Sigmoid colon (tissue), 7 donors: ENCODE measurements at regions of chr13 and their contacts with region 1.

Region 1: DNA sequence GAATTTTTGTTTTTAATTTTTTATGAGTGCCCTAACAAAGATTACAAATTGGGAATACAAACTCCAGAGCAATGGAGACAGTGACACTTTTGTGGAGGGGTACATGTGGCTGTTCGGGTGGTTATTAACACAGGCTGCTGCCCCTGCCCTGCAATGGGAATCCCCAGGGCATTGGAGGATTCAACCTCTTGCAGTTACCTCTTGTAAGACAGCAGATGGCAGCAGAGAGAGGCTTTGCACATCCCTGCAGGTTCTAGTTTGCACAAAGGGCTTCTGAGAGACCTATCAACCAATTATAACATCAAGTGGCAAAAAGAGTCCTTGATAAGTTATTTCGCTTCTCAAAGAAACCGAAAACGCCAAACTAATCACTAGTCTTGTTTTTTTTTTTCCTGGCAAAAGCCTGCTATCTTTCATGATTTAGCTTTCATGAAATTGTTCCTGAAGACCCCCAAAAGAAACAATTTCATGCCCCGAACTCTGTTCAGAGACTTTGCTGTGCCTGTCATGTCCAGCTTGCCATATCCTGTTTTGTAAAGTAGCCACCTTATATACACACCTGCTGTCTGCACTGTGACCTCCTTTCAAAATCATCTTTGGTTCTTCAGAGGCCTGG is 10.4 kb downstream of the GJB2 start:
- DNase-seq: no peak
- H3K4me3 ChIP-seq: no peak overlapping the region
- H3K27ac ChIP-seq: no peak overlapping the region
- H3K4me1 ChIP-seq: peaks cover 0 to 2% (median 0%) of the 10 kb centered on the region in 4 donors
- H3K27me3 ChIP-seq: peaks cover 3 to 66% (median 15%) of the 10 kb centered on the region in 3 donors
- CTCF ChIP-seq: peak in 3 of 4 experiments; percentile 45 to 80 (median 66)
- EP300 ChIP-seq: no peak
- POLR2A ChIP-seq: no peak

Region 2: GRCh38 chr13:19822673-19823072 is 359.7 kb before region 1 on chr13:
- intact Hi-C with region 1: no loop called
- DNase-seq: no peak
- H3K4me3 ChIP-seq: no peak overlapping the region
- H3K27ac ChIP-seq: no peak overlapping the region
- H3K4me1 ChIP-seq: no peaks in the 10 kb centered on the region
- H3K27me3 ChIP-seq: no peaks in the 10 kb centered on the region
- CTCF ChIP-seq: no peak
- EP300 ChIP-seq: no peak
- POLR2A ChIP-seq: no peak

Region 3: GRCh38 chr13:20219577-20219976 is 37.2 kb after region 1 on chr13:
- intact Hi-C with region 1: no loop called
- DNase-seq: no peak
- H3K4me3 ChIP-seq: no peak overlapping the region
- H3K27ac ChIP-seq: no peak overlapping the region
- H3K4me1 ChIP-seq: no peaks in the 10 kb centered on the region
- H3K27me3 ChIP-seq: peaks cover 0 to 9% (median 0%) of the 10 kb centered on the region in 3 donors
- CTCF ChIP-seq: no peak
- EP300 ChIP-seq: no peak
- POLR2A ChIP-seq: no peak

Region 4: GRCh38 chr13:20264271-20265018 is 82.1 kb after region 1 on chr13:
- intact Hi-C with region 1: no loop called
- DNase-seq: no peak
- H3K4me3 ChIP-seq: no peak overlapping the region
- H3K27ac ChIP-seq: no peak overlapping the region
- H3K4me1 ChIP-seq: no peaks in the 10 kb centered on the region
- H3K27me3 ChIP-seq: no peaks in the 10 kb centered on the region
- CTCF ChIP-seq: no peak
- EP300 ChIP-seq: no peak
- POLR2A ChIP-seq: no peak

Region 5: GRCh38 chr13:20703780-20704445 is 521.6 kb after region 1 on chr13:
- intact Hi-C with region 1: loop called (anchors 10 kb)
- DNase-seq: peak; percentile 88
- H3K4me3 ChIP-seq: peak overlapping the region in 3 of 4 donors; percentile 61 to 80 (median 75)
- H3K27ac ChIP-seq: peak overlapping the region; percentile 49 to 67 (median 55)
- H3K4me1 ChIP-seq: peaks cover 0 to 14% (median 11%) of the 10 kb centered on the region in 4 donors
- H3K27me3 ChIP-seq: peaks cover 0 to 32% (median 6%) of the 10 kb centered on the region in 3 donors
- CTCF ChIP-seq: peak in 2 of 4 experiments; percentile 13 to 67
- EP300 ChIP-seq: no peak
- POLR2A ChIP-seq: no peak

Region 6: GRCh38 chr13:20924758-20925394 is 742.5 kb after region 1 on chr13:
- intact Hi-C with region 1: loop called (anchors 5 kb)
- DNase-seq: peak; percentile 86
- H3K4me3 ChIP-seq: no peak overlapping the region
- H3K27ac ChIP-seq: no peak overlapping the region
- H3K4me1 ChIP-seq: no peaks in the 10 kb centered on the region
- H3K27me3 ChIP-seq: no peaks in the 10 kb centered on the region
- CTCF ChIP-seq: peak; percentile 44 to 64 (median 51)
- EP300 ChIP-seq: no peak
- POLR2A ChIP-seq: no peak